ENCODE measurements at regions of chr11 and their contacts with region 1.

Region 1: GRCh38 chr11:93225662-93226061 is 27.9 kb upstream of the SLC36A4 start:
- DNase-seq: peak in 2 of 3 donors; percentile 23 to 39
- H3K4me3 ChIP-seq: no peak overlapping the region
- H3K4me3 Mint-ChIP-seq: no peak overlapping the region
- H3K27ac ChIP-seq: no peak overlapping the region
- H3K27ac Mint-ChIP-seq: no peak overlapping the region
- H3K4me1 ChIP-seq: no peaks in the 10 kb centered on the region
- H3K4me1 Mint-ChIP-seq: peaks cover 5% of the 10 kb centered on the region
- H3K27me3 ChIP-seq: no peaks in the 10 kb centered on the region
- H3K27me3 Mint-ChIP-seq: peaks cover 0 to 6% (median 2%) of the 10 kb centered on the region in 3 donors
- CTCF ChIP-seq: peak; percentile 81

Region 2: GRCh38 chr11:92941676-92942571 is 283.7 kb before region 1 on chr11:
- intact Hi-C with region 1: loop called (anchors 2 to 5 kb)
- DNase-seq: peak; percentile 13 to 37 (median 25)
- H3K4me3 ChIP-seq: no peak overlapping the region
- H3K4me3 Mint-ChIP-seq: no peak overlapping the region
- H3K27ac ChIP-seq: no peak overlapping the region
- H3K27ac Mint-ChIP-seq: no peak overlapping the region
- H3K4me1 ChIP-seq: no peaks in the 10 kb centered on the region
- H3K4me1 Mint-ChIP-seq: no peaks in the 10 kb centered on the region
- H3K27me3 ChIP-seq: peaks cover 0 to 2% of the 10 kb centered on the region in 2 donors
- H3K27me3 Mint-ChIP-seq: peaks cover 2 to 9% (median 4%) of the 10 kb centered on the region in 3 donors
- CTCF ChIP-seq: peak; percentile 80

Region 3: DNA sequence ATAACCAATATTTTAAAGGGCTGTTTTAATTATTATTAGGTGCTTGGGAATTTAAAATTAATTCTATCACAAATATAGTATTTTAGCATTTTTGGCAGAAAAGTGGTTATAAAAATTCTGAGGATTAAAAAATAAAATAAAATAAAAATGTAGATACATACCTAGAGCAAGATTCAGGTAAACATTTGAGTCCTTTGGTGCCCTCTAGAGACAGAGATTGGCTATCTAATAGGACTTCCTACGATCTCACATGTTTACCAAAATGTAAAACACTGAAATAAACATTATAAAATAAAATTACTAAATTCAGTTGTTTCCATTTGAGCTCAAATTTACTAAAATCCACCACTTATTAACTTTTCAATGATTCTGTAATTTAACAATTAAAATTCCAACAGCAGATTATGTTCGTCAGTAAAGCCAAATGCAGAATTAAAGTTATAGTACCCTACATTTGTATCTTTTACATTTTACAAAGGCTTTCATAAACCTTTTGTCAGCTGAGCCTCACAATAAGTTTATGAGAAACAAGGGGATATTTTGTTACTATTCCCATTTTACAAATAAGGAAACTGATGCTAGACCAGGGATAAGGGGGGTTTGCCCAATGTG is 55.6 kb before region 1 on chr11:
- intact Hi-C with region 1: loop called in 1 of 2 experiments (anchors 10 kb)
- DNase-seq: no peak
- H3K4me3 ChIP-seq: no peak overlapping the region
- H3K4me3 Mint-ChIP-seq: no peak overlapping the region
- H3K27ac ChIP-seq: peak overlapping the region in 1 of 2 donors; percentile 6
- H3K27ac Mint-ChIP-seq: peak overlapping the region in 2 of 7 donors; percentile 30 to 63
- H3K4me1 ChIP-seq: peaks cover 12% of the 10 kb centered on the region in 2 donors
- H3K4me1 Mint-ChIP-seq: peaks cover 17% of the 10 kb centered on the region
- H3K27me3 ChIP-seq: no peaks in the 10 kb centered on the region
- H3K27me3 Mint-ChIP-seq: no peaks in the 10 kb centered on the region
- CTCF ChIP-seq: peak; percentile 35

Region 4: DNA sequence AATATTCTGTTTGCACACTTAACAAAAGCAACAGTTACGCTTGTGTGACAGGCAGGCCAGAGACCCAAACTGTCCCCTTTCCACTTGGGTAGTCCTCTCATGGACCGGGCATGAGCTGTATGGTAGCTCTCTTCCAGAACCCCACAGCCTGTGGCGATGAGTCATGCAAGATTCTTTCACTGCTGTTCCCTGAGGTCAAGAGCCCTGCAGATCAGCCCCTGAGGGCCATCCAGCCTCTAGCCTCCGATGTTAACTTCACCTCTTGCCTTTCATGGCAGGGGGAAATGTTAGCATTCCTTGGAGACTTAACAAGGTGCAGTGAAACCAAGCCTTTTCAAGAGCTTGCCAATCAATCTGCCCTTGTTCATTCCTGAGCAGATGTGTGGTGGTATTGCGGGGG is 41.7 kb after region 1 on chr11:
- intact Hi-C with region 1: no loop called
- DNase-seq: no peak
- H3K4me3 ChIP-seq: no peak overlapping the region
- H3K4me3 Mint-ChIP-seq: no peak overlapping the region
- H3K27ac ChIP-seq: no peak overlapping the region
- H3K27ac Mint-ChIP-seq: no peak overlapping the region
- H3K4me1 ChIP-seq: no peaks in the 10 kb centered on the region
- H3K4me1 Mint-ChIP-seq: no peaks in the 10 kb centered on the region
- H3K27me3 ChIP-seq: no peaks in the 10 kb centered on the region
- H3K27me3 Mint-ChIP-seq: peaks cover 0 to 6% (median 1%) of the 10 kb centered on the region in 3 donors
- CTCF ChIP-seq: no peak